B cell (primary cell): ENCODE measurements at regions of chr14 and their contacts with region 1.

Region 1: DNA sequence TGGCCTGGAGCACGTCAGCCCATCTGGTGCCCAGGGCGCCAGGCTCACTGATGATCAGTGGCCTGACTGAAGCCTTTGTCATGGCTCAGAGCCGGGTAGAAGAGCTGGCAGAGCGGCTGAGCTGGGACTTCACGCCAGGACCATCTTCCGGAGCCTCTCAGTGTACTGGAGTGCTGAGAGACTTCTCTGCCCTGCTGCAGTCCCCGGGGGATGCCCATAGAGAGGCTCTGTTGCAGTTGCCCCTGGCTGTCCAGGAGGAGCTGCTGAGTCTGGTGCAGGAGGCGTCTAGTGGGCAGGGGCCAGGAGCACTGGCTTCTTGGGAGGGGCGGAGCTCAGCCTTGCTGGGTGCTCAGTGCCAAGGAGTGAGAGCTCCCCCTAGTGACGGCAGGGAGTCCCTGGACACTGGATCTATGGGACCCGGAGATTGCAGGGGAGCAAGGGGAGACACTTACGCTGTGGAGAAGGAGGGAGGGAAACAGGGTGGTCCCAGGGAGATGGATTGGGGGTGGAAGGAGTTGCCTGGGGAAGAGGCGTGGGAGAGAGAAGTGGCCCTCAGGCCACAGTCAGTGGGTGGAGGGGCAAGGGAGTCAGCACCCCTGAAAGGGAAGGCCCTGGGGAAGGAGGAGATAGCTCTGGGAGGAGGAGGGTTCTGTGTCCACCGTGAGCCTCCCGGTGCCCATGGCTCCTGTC is 2.0 kb downstream of the KHNYN start:
- DNase-seq: peak; percentile 90
- ATAC-seq: peak; percentile 41
- H3K4me3 ChIP-seq: peak overlapping the region in 4 of 5 experiments; percentile 77 to 98 (median 93)
- H3K4me3 Mint-ChIP-seq: peak overlapping the region; percentile 94
- H3K27ac ChIP-seq: peak overlapping the region; percentile 98 to 99
- H3K27ac Mint-ChIP-seq: peak overlapping the region; percentile 98
- H3K4me1 ChIP-seq: peaks cover 32 to 43% of the 10 kb centered on the region in 2 donors
- H3K4me1 Mint-ChIP-seq: peaks cover 50% of the 10 kb centered on the region
- H3K27me3 ChIP-seq: no peaks in the 10 kb centered on the region
- H3K27me3 Mint-ChIP-seq: no peaks in the 10 kb centered on the region
- CTCF ChIP-seq: peak; percentile 87

Region 2: DNA sequence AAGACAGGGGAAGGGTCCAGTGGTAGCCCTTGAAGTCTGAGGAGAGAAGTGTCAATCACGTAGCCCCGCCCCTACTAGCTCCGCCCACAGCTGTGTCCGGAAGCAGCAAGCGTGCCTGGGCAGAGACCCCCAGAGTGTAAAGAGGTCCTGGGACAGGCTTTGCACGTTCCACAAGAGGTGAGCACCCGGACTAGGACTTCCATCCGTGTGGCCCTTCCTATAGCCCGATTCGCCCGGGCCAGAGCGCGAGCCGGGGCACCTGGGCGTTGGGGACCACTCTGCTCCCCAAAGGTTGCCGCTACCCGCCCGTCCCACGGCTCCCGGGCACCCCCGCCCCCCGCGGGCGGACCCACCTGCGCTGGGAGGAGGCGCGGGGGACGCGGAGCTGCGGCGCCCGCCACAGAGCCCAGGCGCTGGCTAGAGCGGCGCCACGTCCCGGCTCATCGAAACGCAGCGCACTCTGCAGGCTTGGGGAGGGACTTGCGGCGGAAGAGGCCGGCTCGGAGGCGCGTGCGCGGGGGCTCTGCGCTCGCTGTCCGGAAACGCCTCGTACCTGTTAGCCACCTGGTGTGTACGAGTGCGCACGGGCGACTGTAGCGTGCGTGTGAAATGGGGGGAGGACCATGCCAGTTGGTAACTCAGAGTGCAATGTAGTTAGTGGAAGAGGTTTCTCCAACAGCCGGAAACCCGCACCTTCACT is 160.4 kb before region 1 on chr14 and contains the start of gene RABGGTA:
- CTCF ChIA-PET with region 1: interaction called, 4 read pairs
- POLR2A ChIA-PET with region 1: interaction called, 7 read pairs
- intact Hi-C with region 1: loop called (anchors 1 kb)
- DNase-seq: peak; percentile 98
- ATAC-seq: peak; percentile 87
- H3K4me3 ChIP-seq: peak within 1 kb of the TSS; percentile 45 to 96 (median 93)
- H3K4me3 Mint-ChIP-seq: peak within 1 kb of the TSS; percentile 94
- H3K27ac ChIP-seq: peak within 1 kb of the TSS; percentile 93 to 97
- H3K27ac Mint-ChIP-seq: peak within 1 kb of the TSS; percentile 94
- H3K4me1 ChIP-seq: peaks cover 32 to 39% of the 10 kb centered on the region in 2 donors
- H3K4me1 Mint-ChIP-seq: peaks cover 48% of the 10 kb centered on the region
- H3K27me3 ChIP-seq: no peaks in the 10 kb centered on the region
- H3K27me3 Mint-ChIP-seq: no peaks in the 10 kb centered on the region
- CTCF ChIP-seq: peak; percentile 75
- total RNA-seq, gene RABGGTA: 57.9 and 70.1 TPM in 2 replicates

Region 3: GRCh38 chr14:24310646-24311604 is 120.8 kb before region 1 on chr14 and contains the start of gene LTB4R:
- CTCF ChIA-PET with region 1: interaction called, 67 read pairs
- POLR2A ChIA-PET with region 1: interaction called, 17 read pairs
- intact Hi-C with region 1: loop called (anchors 1 kb)
- DNase-seq: peak; percentile 90
- ATAC-seq: peak; percentile 76
- H3K4me3 ChIP-seq: peak within 1 kb of the TSS; percentile 8 to 71 (median 57)
- H3K4me3 Mint-ChIP-seq: peak within 1 kb of the TSS; percentile 84
- H3K27ac ChIP-seq: peak within 1 kb of the TSS; percentile 65 to 83
- H3K27ac Mint-ChIP-seq: peak within 1 kb of the TSS; percentile 91
- H3K4me1 ChIP-seq: peaks cover 38 to 57% of the 10 kb centered on the region in 2 donors
- H3K4me1 Mint-ChIP-seq: peaks cover 61% of the 10 kb centered on the region
- H3K27me3 ChIP-seq: no peaks in the 10 kb centered on the region
- H3K27me3 Mint-ChIP-seq: no peaks in the 10 kb centered on the region
- CTCF ChIP-seq: peak; percentile 67
- total RNA-seq, gene LTB4R: 8.8 and 9.2 TPM in 2 replicates

Region 4: GRCh38 chr14:24332268-24332993 is 99.3 kb before region 1 on chr14:
- CTCF ChIA-PET with region 1: interaction called, 650 read pairs
- POLR2A ChIA-PET with region 1: interaction called, 42 read pairs
- intact Hi-C with region 1: loop called (anchors 1 kb)
- DNase-seq: peak; percentile 91
- ATAC-seq: peak; percentile 95
- H3K4me3 ChIP-seq: peak overlapping the region in 4 of 5 experiments; percentile 37 to 67 (median 44)
- H3K4me3 Mint-ChIP-seq: peak overlapping the region; percentile 93
- H3K27ac ChIP-seq: no peak overlapping the region
- H3K27ac Mint-ChIP-seq: peak overlapping the region; percentile 76
- H3K4me1 ChIP-seq: peaks cover 39 to 43% of the 10 kb centered on the region in 2 donors
- H3K4me1 Mint-ChIP-seq: peaks cover 39% of the 10 kb centered on the region
- H3K27me3 ChIP-seq: peaks cover 0 to 33% (median 19%) of the 10 kb centered on the region in 4 experiments
- H3K27me3 Mint-ChIP-seq: peaks cover 17% of the 10 kb centered on the region
- CTCF ChIP-seq: peak; percentile 80

Region 5: DNA sequence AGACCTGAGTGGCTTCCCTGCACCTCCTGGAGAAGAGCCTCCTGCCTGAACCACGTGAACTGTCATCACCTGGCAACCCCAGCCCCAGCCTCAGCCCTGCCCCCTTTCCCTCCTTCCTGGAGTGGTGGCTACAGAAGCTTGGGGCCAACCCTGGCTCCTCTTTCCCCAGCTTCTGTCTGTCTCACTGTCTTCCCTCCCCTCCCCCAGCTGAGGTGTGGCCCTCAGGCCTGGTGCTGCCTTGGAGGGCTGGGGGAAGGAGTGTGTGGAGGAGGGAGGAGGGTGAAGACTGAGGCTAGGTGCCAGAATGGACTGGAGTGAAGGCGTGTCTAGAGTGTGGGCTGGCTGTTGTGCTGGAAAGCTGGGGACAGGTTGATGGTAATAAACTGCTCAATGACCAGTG is 54.1 kb before region 1 on chr14:
- CTCF ChIA-PET with region 1: no interaction called
- POLR2A ChIA-PET with region 1: no interaction called
- intact Hi-C with region 1: no loop called
- DNase-seq: no peak
- ATAC-seq: no peak
- H3K4me3 ChIP-seq: no peak overlapping the region
- H3K4me3 Mint-ChIP-seq: no peak overlapping the region
- H3K27ac ChIP-seq: no peak overlapping the region
- H3K27ac Mint-ChIP-seq: no peak overlapping the region
- H3K4me1 ChIP-seq: no peaks in the 10 kb centered on the region
- H3K4me1 Mint-ChIP-seq: no peaks in the 10 kb centered on the region
- H3K27me3 ChIP-seq: peaks cover 0 to 8% (median 0%) of the 10 kb centered on the region in 4 experiments
- H3K27me3 Mint-ChIP-seq: no peaks in the 10 kb centered on the region
- CTCF ChIP-seq: no peak

Region 6: GRCh38 chr14:24411443-24412389 is 20.0 kb before region 1 on chr14:
- CTCF ChIA-PET with region 1: interaction called, 15 read pairs
- POLR2A ChIA-PET with region 1: no interaction called
- intact Hi-C with region 1: loop called (anchors 2 kb)
- DNase-seq: peak; percentile 67
- ATAC-seq: peak; percentile 87
- H3K4me3 ChIP-seq: no peak overlapping the region
- H3K4me3 Mint-ChIP-seq: no peak overlapping the region
- H3K27ac ChIP-seq: no peak overlapping the region
- H3K27ac Mint-ChIP-seq: no peak overlapping the region
- H3K4me1 ChIP-seq: no peaks in the 10 kb centered on the region
- H3K4me1 Mint-ChIP-seq: no peaks in the 10 kb centered on the region
- H3K27me3 ChIP-seq: peaks cover 0 to 18% (median 4%) of the 10 kb centered on the region in 4 experiments
- H3K27me3 Mint-ChIP-seq: peaks cover 14% of the 10 kb centered on the region
- CTCF ChIP-seq: peak; percentile 72

Region 7: DNA sequence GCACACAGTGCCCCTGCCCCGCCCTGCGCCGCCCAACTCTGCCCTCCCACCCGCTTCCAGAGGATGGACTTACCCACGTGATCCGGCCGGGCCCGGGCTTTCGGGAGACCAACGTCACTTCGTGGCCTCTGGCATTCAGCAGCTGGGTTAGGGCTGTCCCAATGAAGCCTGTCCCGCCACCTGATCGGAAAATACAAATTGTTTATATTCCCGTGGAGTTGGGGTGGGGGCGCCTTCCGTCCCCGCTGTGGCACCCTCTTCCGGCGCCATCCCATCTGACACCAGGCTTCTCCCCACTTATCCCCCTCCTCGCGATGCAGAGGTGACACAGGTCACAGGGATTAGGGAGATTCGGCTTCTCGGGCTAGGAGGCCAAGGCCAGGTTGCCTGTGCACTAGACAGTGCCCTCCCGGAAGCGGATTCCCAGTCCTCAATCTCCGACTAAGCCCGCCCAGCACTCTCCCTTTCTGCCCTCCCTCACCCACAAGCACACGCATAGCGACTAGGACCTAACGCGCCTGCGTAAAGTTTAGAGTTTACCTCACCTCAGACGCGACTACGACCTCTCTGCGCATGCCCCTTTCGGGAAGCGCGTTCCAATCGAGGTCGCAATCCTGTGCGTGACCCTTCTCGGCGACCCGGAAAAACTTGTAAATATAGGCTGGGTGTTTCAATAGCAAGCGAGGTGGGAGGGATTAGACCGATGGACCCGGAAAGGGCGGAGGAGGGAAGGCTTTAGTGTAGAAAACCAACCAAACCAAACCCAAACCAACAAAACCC is 10.7 kb after region 1 on chr14 and contains the start of gene SDR39U1:
- CTCF ChIA-PET with region 1: interaction called, 56 read pairs
- POLR2A ChIA-PET with region 1: interaction called, 18 read pairs
- intact Hi-C with region 1: loop called (anchors 1 kb)
- DNase-seq: peak; percentile 99
- ATAC-seq: peak; percentile 89
- H3K4me3 ChIP-seq: peak within 1 kb of the TSS; percentile 86 to 98 (median 94)
- H3K4me3 Mint-ChIP-seq: peak within 1 kb of the TSS; percentile 97
- H3K27ac ChIP-seq: peak within 1 kb of the TSS; percentile 96
- H3K27ac Mint-ChIP-seq: peak within 1 kb of the TSS; percentile 98
- H3K4me1 ChIP-seq: peaks cover 20 to 29% of the 10 kb centered on the region in 2 donors
- H3K4me1 Mint-ChIP-seq: peaks cover 48% of the 10 kb centered on the region
- H3K27me3 ChIP-seq: no peaks in the 10 kb centered on the region
- H3K27me3 Mint-ChIP-seq: no peaks in the 10 kb centered on the region
- CTCF ChIP-seq: no peak
- total RNA-seq, gene SDR39U1: 107 and 126 TPM in 2 replicates

Region 8: DNA sequence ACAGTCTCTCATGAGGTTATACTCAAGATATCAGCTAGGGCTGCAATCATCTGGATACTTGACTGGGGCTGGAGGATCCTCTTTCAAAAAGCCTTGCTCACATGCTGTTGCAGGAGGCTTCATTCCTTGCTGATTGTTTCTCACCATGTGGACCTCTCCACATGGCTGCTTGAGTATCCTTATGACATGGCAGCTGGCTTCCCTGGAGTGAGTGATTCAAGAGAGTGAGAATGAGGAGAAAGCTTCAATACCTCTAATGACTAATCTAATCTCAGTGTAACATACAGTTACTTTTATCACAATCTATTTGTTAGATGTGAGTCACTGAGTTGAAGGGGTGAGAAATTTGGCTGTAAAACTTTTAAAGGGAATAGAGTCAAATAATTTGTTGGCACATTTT is 25.3 kb after region 1 on chr14:
- CTCF ChIA-PET with region 1: no interaction called
- POLR2A ChIA-PET with region 1: no interaction called
- intact Hi-C with region 1: no loop called
- DNase-seq: no peak
- ATAC-seq: no peak
- H3K4me3 ChIP-seq: no peak overlapping the region
- H3K4me3 Mint-ChIP-seq: no peak overlapping the region
- H3K27ac ChIP-seq: no peak overlapping the region
- H3K27ac Mint-ChIP-seq: no peak overlapping the region
- H3K4me1 ChIP-seq: no peaks in the 10 kb centered on the region
- H3K4me1 Mint-ChIP-seq: no peaks in the 10 kb centered on the region
- H3K27me3 ChIP-seq: no peaks in the 10 kb centered on the region
- H3K27me3 Mint-ChIP-seq: no peaks in the 10 kb centered on the region
- CTCF ChIP-seq: no peak

Region 9: GRCh38 chr14:24481622-24482324 is 50.1 kb after region 1 on chr14:
- CTCF ChIA-PET with region 1: no interaction called
- POLR2A ChIA-PET with region 1: no interaction called
- intact Hi-C with region 1: no loop called
- DNase-seq: peak; percentile 47
- ATAC-seq: peak; percentile 82
- H3K4me3 ChIP-seq: peak overlapping the region in 2 of 5 experiments; percentile 29 to 32
- H3K4me3 Mint-ChIP-seq: peak overlapping the region; percentile 89
- H3K27ac ChIP-seq: no peak overlapping the region
- H3K27ac Mint-ChIP-seq: peak overlapping the region; percentile 47
- H3K4me1 ChIP-seq: peaks cover 9 to 10% of the 10 kb centered on the region in 2 donors
- H3K4me1 Mint-ChIP-seq: peaks cover 17% of the 10 kb centered on the region
- H3K27me3 ChIP-seq: no peaks in the 10 kb centered on the region
- H3K27me3 Mint-ChIP-seq: peaks cover 3% of the 10 kb centered on the region
- CTCF ChIP-seq: peak; percentile 70

Region 10: GRCh38 chr14:24665440-24665991 is 233.8 kb after region 1 on chr14:
- CTCF ChIA-PET with region 1: no interaction called
- POLR2A ChIA-PET with region 1: no interaction called
- intact Hi-C with region 1: no loop called
- DNase-seq: peak; percentile 44
- ATAC-seq: peak; percentile 71
- H3K4me3 ChIP-seq: peak overlapping the region in 3 of 5 experiments; percentile 30 to 45 (median 32)
- H3K4me3 Mint-ChIP-seq: peak overlapping the region; percentile 60
- H3K27ac ChIP-seq: peak overlapping the region; percentile 25 to 64
- H3K27ac Mint-ChIP-seq: peak overlapping the region; percentile 85
- H3K4me1 ChIP-seq: peaks cover 27 to 29% of the 10 kb centered on the region in 2 donors
- H3K4me1 Mint-ChIP-seq: peaks cover 45% of the 10 kb centered on the region
- H3K27me3 ChIP-seq: no peaks in the 10 kb centered on the region
- H3K27me3 Mint-ChIP-seq: no peaks in the 10 kb centered on the region
- CTCF ChIP-seq: no peak